Pancreas (tissue), 10 donors: ENCODE measurements at regions of chr19 and their contacts with region 1.

Region 1: DNA sequence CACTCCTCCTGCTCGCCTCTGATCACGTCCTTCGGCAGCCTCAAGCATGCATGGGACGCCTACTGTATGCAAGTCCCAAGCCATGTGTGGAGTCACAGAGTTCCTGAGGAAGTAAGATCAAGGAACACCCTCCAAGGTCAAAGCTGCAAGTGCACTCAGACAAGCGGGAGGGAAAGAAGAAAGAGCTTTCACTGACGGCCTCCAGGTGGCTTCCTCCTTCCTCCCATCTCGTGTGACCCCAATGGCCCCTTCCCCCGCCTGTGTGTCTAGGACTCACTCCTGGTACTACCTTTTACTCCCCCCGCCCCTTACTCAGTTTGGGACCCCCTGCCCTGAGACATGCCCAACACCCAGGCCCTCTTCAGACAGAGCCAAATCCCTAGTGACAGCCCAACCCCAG is 6.0 kb downstream of the HAUS8 start:
- DNase-seq: no peak
- ATAC-seq: no peak
- H3K4me3 ChIP-seq: no peak overlapping the region
- H3K27ac ChIP-seq: no peak overlapping the region
- H3K4me1 ChIP-seq: peaks cover 0 to 4% (median 4%) of the 10 kb centered on the region in 3 donors
- H3K27me3 ChIP-seq: no peaks in the 10 kb centered on the region
- CTCF ChIP-seq: no peak

Region 2: GRCh38 chr19:17021793-17022583 is 47.2 kb before region 1 on chr19:
- intact Hi-C with region 1: no loop called
- DNase-seq: no peak
- ATAC-seq: peak in 2 of 4 donors; percentile 70 to 72
- H3K4me3 ChIP-seq: no peak overlapping the region
- H3K27ac ChIP-seq: no peak overlapping the region
- H3K4me1 ChIP-seq: no peaks in the 10 kb centered on the region
- H3K27me3 ChIP-seq: peaks cover 0 to 8% (median 0%) of the 10 kb centered on the region in 4 donors
- CTCF ChIP-seq: no peak

Region 3: DNA sequence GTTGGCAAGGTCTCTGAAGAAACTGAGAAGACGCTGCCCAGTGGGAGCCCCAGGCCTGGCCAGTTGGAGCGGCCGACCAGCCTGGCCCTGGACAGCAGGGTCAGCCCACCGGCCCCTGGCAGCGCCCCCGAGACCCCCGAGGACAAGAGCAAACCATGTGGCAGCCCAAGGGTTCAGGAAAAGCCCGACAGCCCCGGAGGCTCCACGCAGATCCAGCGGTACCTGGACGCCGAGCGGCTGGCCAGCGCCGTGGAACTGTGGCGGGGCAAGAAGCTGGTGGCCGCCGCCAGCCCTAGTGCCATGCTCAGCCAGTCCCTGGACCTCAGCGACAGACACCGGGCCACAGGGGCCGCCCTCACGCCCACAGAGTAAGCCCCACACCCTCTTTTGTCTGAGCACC is 125.9 kb after region 1 on chr19:
- intact Hi-C with region 1: no loop called
- DNase-seq: no peak
- ATAC-seq: no peak
- H3K4me3 ChIP-seq: no peak overlapping the region
- H3K27ac ChIP-seq: no peak overlapping the region
- H3K4me1 ChIP-seq: no peaks in the 10 kb centered on the region
- H3K27me3 ChIP-seq: no peaks in the 10 kb centered on the region
- CTCF ChIP-seq: no peak

Region 4: GRCh38 chr19:17282488-17283255 is 213.5 kb after region 1 on chr19:
- intact Hi-C with region 1: loop called (anchors 2 to 10 kb)
- DNase-seq: peak; percentile 76 to 95 (median 88)
- ATAC-seq: peak; percentile 98 to 100 (median 99)
- H3K4me3 ChIP-seq: peak overlapping the region in 2 of 4 donors; percentile 6 to 13
- H3K27ac ChIP-seq: no peak overlapping the region
- H3K4me1 ChIP-seq: peaks cover 0 to 4% (median 0%) of the 10 kb centered on the region in 3 donors
- H3K27me3 ChIP-seq: peaks cover 0 to 6% (median 0%) of the 10 kb centered on the region in 4 donors
- CTCF ChIP-seq: peak; percentile 95 to 96 (median 96)